B cell (primary cell): ENCODE measurements at regions of chr5 and their contacts with region 1.

Region 1: GRCh38 chr5:96868603-96869371 is 7.5 kb upstream of the ERAP2 start:
- DNase-seq: peak; percentile 77
- ATAC-seq: peak; percentile 84
- H3K4me3 ChIP-seq: no peak overlapping the region
- H3K4me3 Mint-ChIP-seq: no peak overlapping the region
- H3K27ac ChIP-seq: no peak overlapping the region
- H3K27ac Mint-ChIP-seq: peak overlapping the region; percentile 4
- H3K4me1 ChIP-seq: peaks cover 31 to 37% of the 10 kb centered on the region in 2 donors
- H3K4me1 Mint-ChIP-seq: peaks cover 46% of the 10 kb centered on the region
- H3K27me3 ChIP-seq: no peaks in the 10 kb centered on the region
- H3K27me3 Mint-ChIP-seq: no peaks in the 10 kb centered on the region
- CTCF ChIP-seq: peak; percentile 93

Region 2: DNA sequence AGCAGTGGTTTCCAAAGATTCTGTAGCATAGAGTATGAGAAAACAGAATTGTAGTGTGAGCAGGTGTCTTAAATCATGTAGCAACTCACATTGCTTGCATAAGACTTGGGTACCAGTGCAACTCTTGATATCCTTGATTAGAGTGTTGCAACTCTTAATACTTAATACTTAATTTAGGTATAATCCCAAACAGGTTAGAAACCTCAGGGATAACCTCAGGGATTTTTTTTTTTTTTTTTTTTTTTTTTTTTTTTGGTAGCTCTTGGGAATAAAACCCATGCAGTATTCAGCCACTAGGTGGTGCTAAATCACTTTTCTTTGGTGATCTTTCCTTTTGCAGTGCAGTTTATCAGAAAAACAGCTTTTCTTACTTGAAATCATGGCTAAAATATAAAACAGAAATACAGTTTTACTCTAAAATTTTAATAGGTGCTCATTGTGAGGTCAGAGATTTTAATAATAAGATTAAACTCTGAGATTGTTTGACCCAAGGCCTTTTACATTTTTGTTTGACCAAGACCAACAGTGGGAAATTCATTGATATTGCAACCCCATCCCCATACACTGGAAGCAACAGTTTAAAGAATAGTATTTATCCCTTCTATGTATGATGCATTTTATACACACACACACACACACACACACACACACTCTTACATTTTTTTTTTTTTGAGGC is 116.3 kb before region 1 on chr5:
- CTCF ChIA-PET with region 1: interaction called, 12 read pairs
- POLR2A ChIA-PET with region 1: no interaction called
- intact Hi-C with region 1: no loop called
- DNase-seq: peak; percentile 72
- ATAC-seq: no peak
- H3K4me3 ChIP-seq: no peak overlapping the region
- H3K4me3 Mint-ChIP-seq: no peak overlapping the region
- H3K27ac ChIP-seq: no peak overlapping the region
- H3K27ac Mint-ChIP-seq: no peak overlapping the region
- H3K4me1 ChIP-seq: no peaks in the 10 kb centered on the region
- H3K4me1 Mint-ChIP-seq: no peaks in the 10 kb centered on the region
- H3K27me3 ChIP-seq: no peaks in the 10 kb centered on the region
- H3K27me3 Mint-ChIP-seq: no peaks in the 10 kb centered on the region
- CTCF ChIP-seq: peak; percentile 85

Region 3: DNA sequence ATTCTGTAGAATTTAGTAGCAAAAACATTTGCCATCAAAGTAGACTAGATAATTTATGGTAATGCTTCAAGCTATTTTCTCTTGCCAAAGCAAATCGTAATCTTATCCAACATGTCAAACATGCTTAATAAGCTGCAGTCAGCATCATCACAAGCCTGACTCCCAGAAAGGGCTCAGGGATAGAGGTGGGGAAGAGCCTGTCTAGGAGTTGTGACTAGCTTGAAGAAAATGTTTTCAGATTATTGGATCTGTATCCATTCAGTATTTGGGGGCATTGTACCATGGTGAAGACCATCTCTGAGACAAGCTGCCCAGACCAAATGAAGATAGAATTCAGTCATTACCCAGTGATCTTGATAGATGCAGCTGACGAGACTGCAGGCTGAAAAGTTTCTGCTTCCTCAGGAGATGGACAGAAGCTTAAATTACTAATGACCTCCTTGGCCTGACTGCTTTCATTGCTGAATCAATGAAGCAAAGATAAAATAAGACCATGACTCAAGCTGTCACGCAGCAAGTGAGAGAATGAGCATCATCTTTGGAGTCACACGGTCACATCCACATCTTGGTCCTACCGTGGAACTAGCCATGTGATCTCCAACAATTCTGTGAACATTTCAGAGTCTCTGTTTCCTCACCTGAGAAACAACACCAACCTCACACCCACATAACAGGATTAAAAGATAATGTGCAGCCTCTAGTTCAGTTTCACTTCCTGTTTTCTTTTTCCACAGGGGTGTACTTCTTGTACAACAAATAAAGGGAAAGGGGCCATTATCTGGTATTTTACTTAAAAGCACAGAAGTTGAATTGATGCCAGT is 16.9 kb after region 1 on chr5:
- CTCF ChIA-PET with region 1: interaction called, 40 read pairs
- POLR2A ChIA-PET with region 1: interaction called, 4 read pairs
- intact Hi-C with region 1: loop called (anchors 1 kb)
- DNase-seq: peak; percentile 86
- ATAC-seq: peak; percentile 79
- H3K4me3 ChIP-seq: peak overlapping the region in 2 of 5 experiments; percentile 5 to 27
- H3K4me3 Mint-ChIP-seq: peak overlapping the region; percentile 75
- H3K27ac ChIP-seq: peak overlapping the region; percentile 76 to 91
- H3K27ac Mint-ChIP-seq: peak overlapping the region; percentile 92
- H3K4me1 ChIP-seq: peaks cover 51 to 57% of the 10 kb centered on the region in 2 donors
- H3K4me1 Mint-ChIP-seq: peaks cover 56% of the 10 kb centered on the region
- H3K27me3 ChIP-seq: no peaks in the 10 kb centered on the region
- H3K27me3 Mint-ChIP-seq: no peaks in the 10 kb centered on the region
- CTCF ChIP-seq: no peak

Region 4: DNA sequence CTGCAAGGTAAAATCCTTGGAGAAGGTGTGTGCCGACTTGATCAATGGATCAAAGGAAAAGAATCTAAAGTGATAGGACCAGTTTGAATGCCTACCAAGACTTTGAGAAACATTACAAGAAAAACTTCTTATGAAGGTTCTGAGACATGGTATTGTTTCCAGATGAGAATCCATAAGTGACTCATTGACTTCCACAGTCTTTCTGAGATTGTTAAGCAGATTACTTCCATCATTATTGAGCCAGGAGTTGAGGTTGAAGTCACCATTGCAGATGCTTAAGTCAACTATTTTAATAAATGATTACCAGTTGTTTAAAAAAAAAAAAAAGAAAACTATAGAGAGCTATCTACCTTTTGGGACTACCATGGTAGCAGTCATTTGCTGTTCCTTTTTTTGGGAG is 74.1 kb after region 1 on chr5:
- CTCF ChIA-PET with region 1: interaction called, 16 read pairs
- POLR2A ChIA-PET with region 1: no interaction called
- intact Hi-C with region 1: no loop called
- DNase-seq: no peak
- ATAC-seq: no peak
- H3K4me3 ChIP-seq: no peak overlapping the region
- H3K4me3 Mint-ChIP-seq: no peak overlapping the region
- H3K27ac ChIP-seq: peak overlapping the region in 1 of 2 donors; percentile 70
- H3K27ac Mint-ChIP-seq: no peak overlapping the region
- H3K4me1 ChIP-seq: peaks cover 37 to 45% of the 10 kb centered on the region in 2 donors
- H3K4me1 Mint-ChIP-seq: peaks cover 62% of the 10 kb centered on the region
- H3K27me3 ChIP-seq: no peaks in the 10 kb centered on the region
- H3K27me3 Mint-ChIP-seq: no peaks in the 10 kb centered on the region
- CTCF ChIP-seq: no peak

Region 5: DNA sequence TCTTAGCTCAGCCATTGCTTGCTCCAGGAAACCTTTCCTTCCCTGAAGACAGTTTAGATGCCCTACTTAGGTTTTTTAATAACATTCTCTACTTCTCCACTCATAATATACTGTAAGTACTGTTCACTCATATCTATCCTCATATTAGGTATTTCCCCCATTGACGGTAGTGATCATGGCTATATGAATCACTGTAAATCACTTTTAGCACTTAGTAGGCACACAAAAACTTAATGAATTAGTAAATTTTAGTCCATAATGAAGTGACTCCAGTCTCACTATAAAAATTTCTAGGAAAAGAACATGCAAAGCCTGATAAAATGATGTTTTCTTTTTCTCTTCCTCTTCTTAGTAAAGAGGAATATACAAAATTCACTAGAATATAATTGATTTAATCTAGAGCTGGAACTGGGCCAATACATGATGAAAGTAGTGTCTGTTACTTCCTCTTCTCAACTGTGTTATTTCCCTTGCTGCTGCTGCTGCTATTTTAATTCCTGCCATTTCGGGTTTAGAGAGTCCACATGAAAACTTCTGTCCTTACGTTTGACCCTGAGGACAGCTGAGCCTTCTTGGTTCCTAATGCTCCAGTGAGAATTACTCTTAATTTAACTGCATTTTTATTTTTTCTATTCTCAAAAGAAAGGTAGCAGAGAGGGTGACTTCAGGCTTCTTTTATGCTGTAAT is 140.6 kb after region 1 on chr5:
- CTCF ChIA-PET with region 1: interaction called, 24 read pairs
- POLR2A ChIA-PET with region 1: no interaction called
- intact Hi-C with region 1: no loop called
- DNase-seq: peak; percentile 81
- ATAC-seq: peak; percentile 68
- H3K4me3 ChIP-seq: peak overlapping the region in 2 of 5 experiments; percentile 11 to 44
- H3K4me3 Mint-ChIP-seq: peak overlapping the region; percentile 69
- H3K27ac ChIP-seq: peak overlapping the region; percentile 65 to 88
- H3K27ac Mint-ChIP-seq: peak overlapping the region; percentile 81
- H3K4me1 ChIP-seq: peaks cover 16 to 23% of the 10 kb centered on the region in 2 donors
- H3K4me1 Mint-ChIP-seq: peaks cover 26% of the 10 kb centered on the region
- H3K27me3 ChIP-seq: no peaks in the 10 kb centered on the region
- H3K27me3 Mint-ChIP-seq: no peaks in the 10 kb centered on the region
- CTCF ChIP-seq: no peak

Region 6: DNA sequence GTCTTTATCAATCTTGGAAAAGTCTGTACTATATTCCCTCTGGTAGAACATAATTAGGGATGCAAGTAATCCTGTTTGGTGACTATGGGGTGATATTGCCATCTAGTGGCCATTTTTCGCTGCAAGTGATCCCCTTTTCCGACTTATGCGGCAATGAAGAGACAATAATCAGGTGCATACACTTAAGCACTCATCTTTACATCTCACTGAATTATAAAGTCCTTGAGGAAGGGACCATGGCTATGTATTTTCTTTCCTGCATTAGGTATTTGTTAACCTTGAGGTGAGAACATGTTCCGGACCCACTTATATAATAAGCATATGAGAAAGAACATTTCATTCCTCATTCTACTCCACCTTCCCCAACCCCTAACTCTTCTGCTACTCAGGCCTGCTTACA is 293.3 kb after region 1 on chr5:
- CTCF ChIA-PET with region 1: interaction called, 288 read pairs
- POLR2A ChIA-PET with region 1: no interaction called
- intact Hi-C with region 1: loop called (anchors 1 kb)
- DNase-seq: peak; percentile 76
- ATAC-seq: peak; percentile 39
- H3K4me3 ChIP-seq: no peak overlapping the region
- H3K4me3 Mint-ChIP-seq: no peak overlapping the region
- H3K27ac ChIP-seq: no peak overlapping the region
- H3K27ac Mint-ChIP-seq: no peak overlapping the region
- H3K4me1 ChIP-seq: peaks cover under 1 to 2% of the 10 kb centered on the region in 2 donors
- H3K4me1 Mint-ChIP-seq: no peaks in the 10 kb centered on the region
- H3K27me3 ChIP-seq: no peaks in the 10 kb centered on the region
- H3K27me3 Mint-ChIP-seq: no peaks in the 10 kb centered on the region
- CTCF ChIP-seq: peak; percentile 96